Heart right ventricle (tissue), 16 donors: ENCODE measurements at regions of chr7 and their contacts with region 1.

Region 1: GRCh38 chr7:66204822-66205740 is at the start of gene TPST1:
- DNase-seq: peak; percentile 87 to 91
- ATAC-seq: peak; percentile 95 to 98 (median 97)
- H3K4me3 ChIP-seq: peak within 1 kb of the TSS; percentile 69 to 98 (median 92)
- H3K27ac ChIP-seq: peak within 1 kb of the TSS in 9 of 10 donors; percentile 60 to 90 (median 76)
- H3K4me1 ChIP-seq: peaks cover 0 to 28% (median 11%) of the 10 kb centered on the region in 9 donors
- H3K27me3 ChIP-seq: peaks cover 0 to 17% (median 0%) of the 10 kb centered on the region in 7 donors
- CTCF ChIP-seq: peak; percentile 39 to 78 (median 61)
- total RNA-seq, gene TPST1: 2.7 to 7.3 (median 4.7) TPM

Region 2: GRCh38 chr7:66150471-66150870 is 54.6 kb before region 1 on chr7:
- intact Hi-C with region 1: loop called in 6 of 10 experiments (anchors 2 to 10 kb)
- DNase-seq: peak; percentile 44 to 66
- ATAC-seq: peak; percentile 46 to 80 (median 72)
- H3K4me3 ChIP-seq: peak overlapping the region in 1 of 10 donors; percentile 13
- H3K27ac ChIP-seq: peak overlapping the region; percentile 24 to 84 (median 78)
- H3K4me1 ChIP-seq: peaks cover 18 to 63% (median 40%) of the 10 kb centered on the region in 9 donors
- H3K27me3 ChIP-seq: no peaks in the 10 kb centered on the region
- CTCF ChIP-seq: no peak

Region 3: DNA sequence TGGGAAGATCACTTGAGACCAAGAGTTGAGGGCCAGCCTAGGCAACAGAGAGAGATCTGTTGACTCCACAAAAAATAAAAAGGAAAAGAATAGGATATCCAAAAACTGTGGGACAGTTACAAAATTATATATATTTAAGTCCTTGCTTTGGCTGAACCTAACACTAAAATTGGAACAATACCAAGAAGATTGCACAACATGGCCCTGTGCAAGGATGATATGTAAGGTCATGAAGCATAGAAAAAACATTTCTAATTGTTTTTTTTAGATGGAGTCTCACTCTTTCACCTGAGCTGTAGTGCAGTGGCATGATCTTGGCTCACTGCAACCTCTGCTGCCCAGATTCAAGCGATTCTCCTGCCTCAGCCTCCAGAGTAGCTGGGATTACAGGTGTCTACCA is 139.1 kb after region 1 on chr7:
- intact Hi-C with region 1: loop called in 1 of 10 experiments (anchors 10 kb)
- DNase-seq: no peak
- ATAC-seq: no peak
- H3K4me3 ChIP-seq: no peak overlapping the region
- H3K27ac ChIP-seq: no peak overlapping the region
- H3K4me1 ChIP-seq: peaks cover 0 to 13% (median 5%) of the 10 kb centered on the region in 9 donors
- H3K27me3 ChIP-seq: no peaks in the 10 kb centered on the region
- CTCF ChIP-seq: no peak

Region 4: DNA sequence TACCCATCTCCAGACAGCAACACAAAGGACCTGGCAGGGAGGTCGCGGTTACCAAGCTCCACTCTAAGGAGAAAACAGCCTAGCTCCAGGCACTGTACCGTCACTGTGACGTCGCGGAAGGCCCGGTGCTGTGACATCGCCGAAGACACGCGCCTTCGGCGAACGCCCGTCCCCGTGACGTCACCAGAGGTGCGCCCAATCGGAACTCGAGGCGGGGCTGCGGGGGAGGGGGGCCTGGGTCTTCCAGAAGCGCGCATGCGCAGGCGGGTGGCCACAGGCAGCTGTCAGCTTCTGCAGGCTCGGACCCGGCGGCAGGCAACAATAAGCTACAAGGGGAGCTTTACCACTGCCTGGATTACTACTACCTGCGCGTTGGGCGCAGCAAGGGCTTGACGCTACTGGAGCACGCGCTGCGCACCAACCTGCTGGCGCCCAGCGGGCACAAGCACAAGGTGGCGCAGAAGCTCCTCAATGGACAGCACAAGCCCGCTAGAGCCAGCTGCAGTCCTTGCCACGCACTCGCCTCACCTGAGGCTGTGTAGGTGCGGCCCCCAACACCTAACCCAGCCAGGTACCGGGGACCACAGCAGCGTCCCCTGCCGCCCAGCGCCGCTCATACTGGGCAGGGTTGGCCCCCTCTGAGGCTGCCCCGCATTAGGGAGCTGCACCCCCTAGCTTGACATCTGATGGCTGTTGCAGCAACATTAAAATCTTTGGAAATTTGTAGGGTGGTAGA is 208.5 kb after region 1 on chr7:
- intact Hi-C with region 1: loop called in 1 of 10 experiments (anchors 5 kb)
- DNase-seq: peak; percentile 75 to 83
- ATAC-seq: peak; percentile 88 to 96 (median 92)
- H3K4me3 ChIP-seq: peak overlapping the region; percentile 18 to 64 (median 55)
- H3K27ac ChIP-seq: peak overlapping the region in 2 of 10 donors; percentile 26 to 31
- H3K4me1 ChIP-seq: peaks cover 0 to 16% (median 8%) of the 10 kb centered on the region in 9 donors
- H3K27me3 ChIP-seq: no peaks in the 10 kb centered on the region
- CTCF ChIP-seq: peak in 6 of 9 donors; percentile 23 to 59 (median 49)